ENCODE measurements at regions of chr19 and their contacts with region 1.

Region 1: DNA sequence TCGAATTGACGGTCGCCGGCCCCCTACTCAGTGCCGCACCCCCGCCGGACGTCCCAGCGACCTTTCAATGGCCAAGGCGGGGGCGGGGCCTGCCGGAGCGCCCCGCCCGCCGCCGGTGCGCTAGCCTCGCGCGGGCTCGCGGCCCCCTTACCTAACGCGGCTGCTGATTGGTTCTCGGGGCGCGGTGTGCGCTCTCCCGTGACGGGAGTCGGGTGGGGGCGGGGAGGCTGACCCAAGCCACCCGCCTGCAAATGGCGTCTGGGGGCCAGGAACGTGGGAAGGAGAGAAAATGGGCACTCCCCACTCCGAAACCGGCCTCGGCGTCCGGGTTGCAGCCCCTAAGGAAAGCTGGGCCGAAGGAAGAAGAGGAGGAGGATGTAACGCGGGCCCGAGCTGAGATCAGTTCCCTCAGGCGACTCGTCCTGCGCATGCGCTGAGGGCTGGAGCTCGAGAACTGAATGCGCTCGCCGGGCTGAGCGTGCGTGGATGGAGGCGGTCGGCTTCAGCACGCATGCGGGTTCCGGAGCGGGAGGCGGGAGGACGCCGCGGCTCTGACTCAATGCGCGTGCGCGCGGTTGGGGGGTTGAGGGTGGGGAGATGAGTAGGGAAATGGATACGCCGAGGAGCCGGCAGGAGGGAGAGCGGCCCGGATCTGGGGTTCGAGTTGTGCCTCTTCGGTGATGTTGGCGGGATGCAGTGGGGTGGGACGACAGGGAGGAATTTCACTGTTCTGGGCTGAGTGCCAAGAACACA is at the start of gene SMG9:
- DNase-seq: peak; percentile 96 to 99 (median 98)
- H3K4me3 ChIP-seq: peak within 1 kb of the TSS; percentile 73 to 94 (median 88)
- H3K27ac ChIP-seq: peak within 1 kb of the TSS; percentile 79 to 94
- H3K4me1 ChIP-seq: peaks cover 4 to 43% (median 28%) of the 10 kb centered on the region in 4 experiments
- H3K27me3 ChIP-seq: no peaks in the 10 kb centered on the region

Region 2: GRCh38 chr19:43727593-43727853 is 27.2 kb before region 1 on chr19:
- CTCF ChIA-PET with region 1: no interaction called
- POLR2A ChIA-PET with region 1: no interaction called
- DNase-seq: no peak
- H3K4me3 ChIP-seq: no peak overlapping the region
- H3K27ac ChIP-seq: no peak overlapping the region
- H3K4me1 ChIP-seq: peaks cover 12 to 48% (median 36%) of the 10 kb centered on the region in 4 experiments
- H3K27me3 ChIP-seq: peaks cover 0 to 2% (median 0%) of the 10 kb centered on the region in 5 experiments

Region 3: DNA sequence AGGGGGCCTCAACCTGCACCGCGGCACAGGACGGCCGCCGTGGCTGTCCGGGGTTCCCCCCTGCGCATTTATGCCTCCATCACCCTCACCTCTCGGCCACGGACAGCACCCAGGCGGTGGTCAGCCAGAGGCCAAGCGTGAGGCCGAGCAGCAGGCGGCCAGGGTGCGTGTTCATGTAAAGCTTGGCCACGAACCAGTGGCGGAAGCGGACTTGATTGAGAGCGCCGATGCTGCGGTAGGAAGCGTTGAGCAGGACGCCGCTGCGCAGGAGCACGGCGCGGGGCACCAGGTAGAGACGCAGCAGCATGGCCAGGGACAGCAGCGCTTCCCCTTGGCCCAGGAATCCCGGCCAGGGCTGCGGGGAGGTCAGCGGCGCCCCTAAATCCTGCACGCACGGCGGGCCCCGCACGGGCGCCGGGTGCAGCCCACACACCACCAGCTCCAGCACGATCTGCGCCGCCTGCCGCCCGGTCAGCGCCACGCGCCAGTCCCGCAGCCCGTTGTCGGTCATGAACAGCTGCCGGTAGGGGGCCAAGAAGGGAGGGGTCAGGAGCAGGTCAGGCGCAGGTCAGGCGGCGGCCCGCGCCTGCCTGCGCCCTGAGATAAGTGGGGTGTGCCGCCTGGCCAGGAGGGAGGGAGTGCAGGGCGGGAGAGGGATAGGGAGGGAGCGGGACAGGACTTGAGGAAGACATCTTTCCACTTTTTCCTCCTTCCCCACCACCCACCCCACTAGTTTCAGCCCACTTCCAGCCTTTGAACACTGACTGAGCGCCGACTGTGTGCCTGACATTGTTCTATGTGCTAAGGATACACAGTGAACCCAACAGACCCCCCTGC is 19.6 kb after region 1 on chr19:
- CTCF ChIA-PET with region 1: interaction called, 65 read pairs
- POLR2A ChIA-PET with region 1: interaction called, 9 read pairs
- DNase-seq: peak; percentile 73 to 87 (median 84)
- H3K4me3 ChIP-seq: peak overlapping the region in 4 of 7 experiments; percentile 4 to 45 (median 17)
- H3K27ac ChIP-seq: peak overlapping the region in 1 of 2 experiments; percentile 90
- H3K4me1 ChIP-seq: peaks cover 8 to 58% (median 51%) of the 10 kb centered on the region in 4 experiments
- H3K27me3 ChIP-seq: no peaks in the 10 kb centered on the region

Region 4: DNA sequence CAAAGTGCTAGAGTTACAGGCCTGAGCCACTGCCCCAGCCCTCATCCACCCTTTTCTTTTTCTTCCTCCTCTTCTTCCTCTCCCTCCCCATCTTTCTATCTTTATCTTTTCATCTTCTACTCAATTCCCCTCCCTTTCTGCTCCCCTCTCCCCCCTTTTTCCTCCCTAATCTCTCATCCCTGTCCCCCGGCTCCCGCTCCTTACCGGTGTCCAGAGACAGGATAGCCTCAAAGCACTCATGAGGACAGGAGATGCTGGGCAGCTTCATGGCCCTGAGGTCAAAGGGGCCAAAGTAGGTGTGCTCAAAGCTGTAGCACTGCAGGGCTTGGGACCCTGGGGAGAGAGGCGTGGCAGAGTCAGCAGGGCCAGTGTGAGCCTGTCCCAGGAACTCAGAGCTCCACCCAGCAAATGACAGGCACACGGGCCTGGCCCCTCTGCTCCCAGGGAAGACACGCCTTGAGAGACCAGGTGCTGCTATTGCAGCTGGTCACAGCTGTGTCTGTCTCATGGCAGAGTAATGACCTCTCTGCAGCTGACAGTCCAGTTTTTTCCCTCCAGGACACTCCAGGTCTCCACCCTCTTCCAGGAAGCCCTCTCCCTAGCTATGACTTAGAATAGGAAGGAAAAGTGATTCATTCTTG is 44.9 kb after region 1 on chr19:
- CTCF ChIA-PET with region 1: no interaction called
- POLR2A ChIA-PET with region 1: no interaction called
- DNase-seq: no peak
- H3K4me3 ChIP-seq: no peak overlapping the region
- H3K27ac ChIP-seq: no peak overlapping the region
- H3K4me1 ChIP-seq: peaks cover 0 to 13% (median 9%) of the 10 kb centered on the region in 4 experiments
- H3K27me3 ChIP-seq: peaks cover 0 to 33% (median 0%) of the 10 kb centered on the region in 5 experiments

Measured in common myeloid progenitor, CD34-positive (primary cell).